Posterior vena cava (tissue), 2 donors: ENCODE measurements at regions of chr5 and their contacts with region 1.

Region 1: GRCh38 chr5:157387683-157388093 is 72.3 kb upstream of the NIPAL4 start:
- DNase-seq: no peak

Region 2: GRCh38 chr5:156783092-156783491 is 604.6 kb before region 1 on chr5:
- intact Hi-C with region 1: no loop called
- DNase-seq: no peak

Region 3: DNA sequence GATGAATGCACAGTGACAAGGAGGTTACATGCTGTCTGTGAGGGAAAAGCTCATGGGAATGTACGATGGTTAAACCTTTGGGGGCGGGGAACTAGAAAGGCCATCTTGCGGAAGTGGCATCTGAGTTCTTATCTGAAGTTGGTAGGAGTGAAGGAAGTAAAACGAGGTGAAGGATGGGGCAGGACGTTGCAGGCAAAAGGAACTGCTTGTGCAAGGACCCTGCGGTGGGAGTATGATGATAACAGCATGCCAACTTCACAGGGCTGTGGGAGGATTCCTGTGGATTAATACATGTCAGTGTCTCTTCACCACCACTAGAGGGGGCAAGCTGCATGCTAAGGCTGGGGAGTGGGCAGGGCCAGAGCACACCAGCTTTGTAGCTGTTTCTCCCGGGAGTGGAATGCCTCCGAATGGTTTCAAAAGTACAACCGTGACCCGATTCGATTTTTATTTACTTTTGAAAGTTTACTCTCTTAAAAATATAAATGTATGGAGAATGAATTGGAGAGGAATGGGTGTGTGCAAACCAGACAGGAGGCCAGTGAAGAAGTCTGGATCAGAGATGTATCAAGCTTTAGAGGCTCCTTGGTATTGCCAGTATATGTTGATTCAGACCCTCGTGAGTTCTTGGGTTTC is 59.3 kb before region 1 on chr5:
- intact Hi-C with region 1: loop called in 1 of 2 experiments (anchors 2 kb)
- DNase-seq: peak; percentile 84